ENCODE measurements at regions of chr14 and their contacts with region 1.

Region 1: DNA sequence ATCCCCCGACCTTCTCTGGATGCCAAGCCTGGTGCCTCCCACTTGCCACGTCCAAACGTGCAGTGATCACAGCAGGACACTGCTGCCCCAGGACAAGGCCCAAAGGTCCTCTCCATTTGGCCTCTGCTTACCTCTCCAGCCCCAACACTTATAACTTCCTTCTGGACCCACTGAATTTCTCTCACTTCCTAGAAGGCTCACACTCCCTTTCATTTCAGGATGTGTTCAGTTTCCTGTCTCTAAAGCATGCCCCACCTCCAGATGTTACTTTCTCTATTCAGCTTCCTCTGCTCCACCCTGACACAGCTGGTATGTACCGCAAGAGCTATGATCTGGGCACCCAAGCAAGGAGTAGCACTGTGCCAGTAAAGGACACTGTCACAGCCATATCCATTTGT is 33.0 kb downstream of the CDKL1 start:
- DNase-seq: peak; percentile 61 to 77 (median 73)
- H3K4me3 ChIP-seq: peak overlapping the region; percentile 64 to 79
- H3K4me3 Mint-ChIP-seq: peak overlapping the region; percentile 84 to 97 (median 90)
- H3K27ac ChIP-seq: peak overlapping the region; percentile 73
- H3K27ac Mint-ChIP-seq: peak overlapping the region; percentile 83 to 97 (median 93)
- H3K4me1 ChIP-seq: peaks cover 17% of the 10 kb centered on the region
- H3K4me1 Mint-ChIP-seq: peaks cover 28 to 33% (median 30%) of the 10 kb centered on the region in 4 donors
- H3K27me3 ChIP-seq: no peaks in the 10 kb centered on the region
- H3K27me3 Mint-ChIP-seq: no peaks in the 10 kb centered on the region

Region 2: DNA sequence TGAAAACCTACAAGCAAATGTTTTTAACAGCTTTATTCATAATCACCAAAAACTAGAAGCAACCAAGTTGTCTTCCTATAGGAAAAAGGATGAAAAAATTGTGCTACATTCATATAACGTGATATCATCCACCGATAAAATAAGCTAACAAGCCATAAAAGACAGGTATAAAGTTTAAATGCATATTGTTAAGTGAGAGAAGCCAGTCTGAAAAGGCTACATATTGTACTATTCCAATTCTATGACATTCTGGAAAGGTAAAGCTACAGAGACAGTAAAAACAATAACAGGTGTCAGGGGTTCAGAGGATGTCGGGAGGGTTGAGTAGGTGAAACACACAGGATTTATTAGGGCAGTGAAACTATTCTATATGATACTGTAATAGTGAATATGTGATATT is 10.2 kb after region 1 on chr14:
- CTCF ChIA-PET with region 1: interaction called, 10 read pairs
- POLR2A ChIA-PET with region 1: interaction called, 6 read pairs
- intact Hi-C with region 1: no loop called
- DNase-seq: no peak
- H3K4me3 ChIP-seq: no peak overlapping the region
- H3K4me3 Mint-ChIP-seq: no peak overlapping the region
- H3K27ac ChIP-seq: no peak overlapping the region
- H3K27ac Mint-ChIP-seq: no peak overlapping the region
- H3K4me1 ChIP-seq: no peaks in the 10 kb centered on the region
- H3K4me1 Mint-ChIP-seq: no peaks in the 10 kb centered on the region
- H3K27me3 ChIP-seq: peaks cover 4% of the 10 kb centered on the region
- H3K27me3 Mint-ChIP-seq: no peaks in the 10 kb centered on the region

Region 3: GRCh38 chr14:50396631-50397390 is 33.1 kb after region 1 on chr14 and contains the start of gene CDKL1:
- CTCF ChIA-PET with region 1: interaction called, 3 read pairs
- POLR2A ChIA-PET with region 1: interaction called, 28 read pairs
- intact Hi-C with region 1: loop called (anchors 1 kb)
- DNase-seq: peak; percentile 9 to 46 (median 24)
- H3K4me3 ChIP-seq: peak within 1 kb of the TSS; percentile 39 to 73
- H3K4me3 Mint-ChIP-seq: peak within 1 kb of the TSS; percentile 88 to 97 (median 90)
- H3K27ac ChIP-seq: no peak within 1 kb of the TSS
- H3K27ac Mint-ChIP-seq: peak within 1 kb of the TSS in 6 of 7 donors; percentile 3 to 92 (median 65)
- H3K4me1 ChIP-seq: peaks cover 14% of the 10 kb centered on the region
- H3K4me1 Mint-ChIP-seq: peaks cover 8 to 16% (median 12%) of the 10 kb centered on the region in 4 donors
- H3K27me3 ChIP-seq: no peaks in the 10 kb centered on the region
- H3K27me3 Mint-ChIP-seq: peaks cover 0 to 2% of the 10 kb centered on the region in 2 donors
- total RNA-seq, gene CDKL1: 6.4 to 6.5 TPM

Region 4: GRCh38 chr14:50425816-50426215 is 62.1 kb after region 1 on chr14:
- CTCF ChIA-PET with region 1: no interaction called
- POLR2A ChIA-PET with region 1: no interaction called
- intact Hi-C with region 1: no loop called
- DNase-seq: no peak
- H3K4me3 ChIP-seq: no peak overlapping the region
- H3K4me3 Mint-ChIP-seq: no peak overlapping the region
- H3K27ac ChIP-seq: no peak overlapping the region
- H3K27ac Mint-ChIP-seq: no peak overlapping the region
- H3K4me1 ChIP-seq: no peaks in the 10 kb centered on the region
- H3K4me1 Mint-ChIP-seq: no peaks in the 10 kb centered on the region
- H3K27me3 ChIP-seq: no peaks in the 10 kb centered on the region
- H3K27me3 Mint-ChIP-seq: no peaks in the 10 kb centered on the region

Region 5: DNA sequence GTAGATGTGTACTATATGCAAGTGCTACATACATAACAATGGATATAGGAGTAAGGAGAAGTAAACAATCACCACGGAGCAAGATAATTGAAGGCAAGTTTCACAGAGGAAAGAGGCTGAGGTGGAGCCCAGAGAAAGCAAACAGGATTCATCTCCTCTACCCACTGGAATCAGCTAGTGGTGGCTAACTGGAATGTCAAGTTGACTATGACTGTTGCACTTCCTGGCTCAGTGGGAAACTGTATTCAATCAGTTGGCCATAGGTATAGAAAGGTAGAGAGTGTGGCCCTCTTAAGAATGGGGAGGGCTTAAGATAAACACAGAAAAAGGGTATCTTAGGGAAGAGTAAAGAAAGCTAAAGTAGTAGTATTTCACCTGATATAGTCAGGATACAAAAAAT is 106.3 kb after region 1 on chr14:
- CTCF ChIA-PET with region 1: no interaction called
- POLR2A ChIA-PET with region 1: no interaction called
- intact Hi-C with region 1: no loop called
- DNase-seq: no peak
- H3K4me3 ChIP-seq: no peak overlapping the region
- H3K4me3 Mint-ChIP-seq: no peak overlapping the region
- H3K27ac ChIP-seq: no peak overlapping the region
- H3K27ac Mint-ChIP-seq: peak overlapping the region in 1 of 7 donors; percentile 10
- H3K4me1 ChIP-seq: no peaks in the 10 kb centered on the region
- H3K4me1 Mint-ChIP-seq: peaks cover 3 to 8% (median 6%) of the 10 kb centered on the region in 4 donors
- H3K27me3 ChIP-seq: no peaks in the 10 kb centered on the region
- H3K27me3 Mint-ChIP-seq: no peaks in the 10 kb centered on the region